OCI-LY7 (cell line): ENCODE measurements at regions of chr4 and their contacts with region 1.

Region 1: DNA sequence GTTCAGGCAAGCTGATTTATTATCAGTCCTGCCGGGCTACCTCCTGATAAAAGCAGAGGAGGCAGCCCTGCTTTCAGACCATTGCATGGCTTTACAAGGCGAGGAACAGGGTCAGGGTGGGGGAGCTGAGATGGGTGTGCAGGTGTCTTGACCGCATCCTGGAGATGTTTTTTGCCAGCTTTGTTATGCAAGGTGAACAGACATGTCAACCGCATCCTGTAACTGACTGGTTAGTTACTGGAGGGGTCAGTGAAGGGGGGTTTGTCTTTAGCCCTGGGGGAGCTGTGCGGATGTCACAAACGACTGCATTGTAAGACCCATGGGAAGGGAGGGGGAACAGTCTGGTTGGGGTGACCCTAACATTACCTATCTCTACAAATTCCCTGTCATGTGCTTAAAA is 10.0 kb downstream of the ADAM29 start:
- DNase-seq: peak; percentile 99
- H3K4me3 ChIP-seq: peak overlapping the region; percentile 53
- H3K27ac ChIP-seq: peak overlapping the region; percentile 100
- H3K4me1 ChIP-seq: peaks cover 94% of the 10 kb centered on the region
- CTCF ChIP-seq: no peak

Region 2: DNA sequence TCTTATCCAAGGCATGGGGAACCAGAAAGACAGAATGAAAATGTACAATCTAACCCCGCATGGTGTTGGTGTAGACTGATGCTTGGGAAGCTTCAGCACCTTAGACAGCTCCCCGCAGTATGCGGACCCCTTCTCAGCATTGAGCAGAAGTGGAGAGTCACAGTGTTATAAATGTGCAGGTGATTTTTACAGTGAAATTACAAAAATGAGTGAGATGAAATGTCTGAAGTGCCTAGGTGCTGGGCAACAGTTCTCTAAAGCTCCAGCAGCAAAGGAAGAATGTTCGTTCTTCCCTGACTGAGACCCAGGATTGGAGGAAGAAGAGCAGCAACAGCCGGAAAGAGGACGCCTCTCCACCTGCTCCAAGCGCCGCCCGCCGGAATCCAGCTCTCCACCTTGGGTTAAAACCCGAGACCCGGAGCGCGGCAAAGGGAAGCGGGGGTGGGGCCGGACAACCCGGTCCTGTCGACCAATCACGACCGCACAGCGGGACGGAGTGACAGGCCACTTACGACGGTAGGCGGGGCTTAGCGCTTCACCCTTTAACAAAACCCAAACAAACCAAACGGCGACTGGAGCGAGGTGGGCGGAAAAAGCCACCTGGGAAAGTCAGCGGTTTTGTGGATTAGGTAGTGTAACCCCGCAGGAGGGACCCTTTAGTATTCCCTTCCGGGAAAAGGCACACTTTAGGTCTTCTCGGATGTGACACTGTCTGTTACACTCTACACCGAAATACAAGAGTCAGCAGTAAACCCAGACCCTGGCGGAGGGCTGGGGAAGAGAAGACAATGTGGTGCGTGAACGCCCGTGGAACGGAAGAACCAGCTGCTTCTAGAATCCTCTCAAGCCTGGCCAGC is 99.1 kb before region 1 on chr4 and contains the start of gene GLRA3:
- CTCF ChIA-PET with region 1: no interaction called
- POLR2A ChIA-PET with region 1: no interaction called
- intact Hi-C with region 1: loop called (anchors 2 kb)
- DNase-seq: peak; percentile 97
- H3K4me3 ChIP-seq: peak within 1 kb of the TSS; percentile 73
- H3K27ac ChIP-seq: peak within 1 kb of the TSS; percentile 74
- H3K4me1 ChIP-seq: peaks cover 15% of the 10 kb centered on the region
- CTCF ChIP-seq: no peak
- total RNA-seq, gene GLRA3: 0.21 and 0.92 TPM in 2 replicates

Region 3: DNA sequence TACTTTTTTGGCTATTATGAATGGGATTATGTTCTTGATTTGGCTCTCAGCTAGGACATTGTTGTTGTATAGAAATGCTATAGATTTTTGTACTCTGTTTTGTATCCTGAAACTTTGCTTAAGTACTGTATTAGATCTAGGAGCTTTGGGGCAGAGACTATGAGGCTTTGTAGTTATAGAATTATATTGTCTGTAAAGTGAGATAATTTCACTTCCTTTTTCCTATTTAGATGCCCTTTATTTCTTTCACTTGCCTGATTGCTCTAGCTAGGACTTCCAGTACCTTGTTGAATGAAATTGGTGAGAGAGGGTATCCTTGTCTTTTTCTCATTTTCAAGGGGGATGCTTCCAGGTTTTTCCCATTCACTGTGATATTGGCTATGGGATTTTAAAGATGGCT is 18.1 kb after region 1 on chr4:
- CTCF ChIA-PET with region 1: no interaction called
- POLR2A ChIA-PET with region 1: interaction called, 11 read pairs
- intact Hi-C with region 1: no loop called
- DNase-seq: peak; percentile 54
- H3K4me3 ChIP-seq: no peak overlapping the region
- H3K27ac ChIP-seq: peak overlapping the region; percentile 41
- H3K4me1 ChIP-seq: peaks cover 20% of the 10 kb centered on the region
- CTCF ChIP-seq: no peak

Region 4: DNA sequence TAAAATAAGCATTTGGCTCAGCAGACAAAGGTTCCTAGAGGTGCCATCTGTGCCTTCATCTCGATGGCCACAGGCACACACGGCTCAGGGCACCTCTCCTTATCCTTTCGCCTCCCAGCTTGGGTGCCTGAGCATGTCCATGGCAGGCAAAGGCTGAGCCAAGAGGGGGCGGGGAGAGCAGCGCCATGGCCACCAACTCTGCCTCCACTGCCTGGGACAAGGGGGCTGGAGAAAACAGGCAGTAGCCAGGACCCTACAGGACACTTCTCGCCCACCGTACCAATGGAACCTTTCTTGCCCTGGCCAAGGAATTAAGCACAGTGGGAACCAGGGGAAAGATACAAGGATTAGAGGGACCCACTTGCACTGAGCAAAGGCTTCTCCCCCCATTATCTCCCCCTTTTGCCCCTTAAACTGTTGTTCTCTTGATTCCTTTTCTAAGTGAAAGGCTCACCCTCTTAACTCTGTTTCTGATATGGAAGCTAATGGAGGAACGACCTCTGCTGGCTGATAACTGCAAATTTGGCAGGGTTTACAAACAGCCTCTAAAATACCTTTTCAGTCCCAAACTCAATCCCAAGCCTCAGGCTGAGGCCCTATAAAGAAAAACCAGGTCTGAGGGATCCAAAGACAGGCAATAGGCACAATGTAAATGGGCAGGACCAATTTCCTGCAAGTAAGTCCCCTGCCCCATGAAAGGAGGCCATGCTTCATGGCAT is 325.2 kb after region 1 on chr4:
- CTCF ChIA-PET with region 1: no interaction called
- POLR2A ChIA-PET with region 1: no interaction called
- intact Hi-C with region 1: loop called (anchors 1 kb)
- DNase-seq: peak; percentile 54
- H3K4me3 ChIP-seq: no peak overlapping the region
- H3K27ac ChIP-seq: no peak overlapping the region
- H3K4me1 ChIP-seq: no peaks in the 10 kb centered on the region
- CTCF ChIP-seq: peak; percentile 77

Region 5: GRCh38 chr4:175823015-175823742 is 895.0 kb after region 1 on chr4:
- CTCF ChIA-PET with region 1: no interaction called
- POLR2A ChIA-PET with region 1: interaction called, 3 read pairs
- intact Hi-C with region 1: loop called (anchors 10 kb)
- DNase-seq: peak; percentile 86
- H3K4me3 ChIP-seq: peak overlapping the region; percentile 42
- H3K27ac ChIP-seq: peak overlapping the region; percentile 91
- H3K4me1 ChIP-seq: peaks cover 64% of the 10 kb centered on the region
- CTCF ChIP-seq: no peak